Pancreas (tissue), 10 donors: ENCODE measurements at regions of chr1 and their contacts with region 1.

Region 1: GRCh38 chr1:151309811-151310323 is 17.3 kb downstream of the PI4KB start:
- DNase-seq: no peak
- ATAC-seq: peak in 3 of 4 donors; percentile 28 to 59 (median 34)
- H3K4me3 ChIP-seq: no peak overlapping the region
- H3K27ac ChIP-seq: peak overlapping the region in 1 of 4 donors; percentile 6
- H3K4me1 ChIP-seq: peaks cover 0 to 13% (median 3%) of the 10 kb centered on the region in 3 donors
- H3K27me3 ChIP-seq: no peaks in the 10 kb centered on the region
- CTCF ChIP-seq: no peak

Region 2: DNA sequence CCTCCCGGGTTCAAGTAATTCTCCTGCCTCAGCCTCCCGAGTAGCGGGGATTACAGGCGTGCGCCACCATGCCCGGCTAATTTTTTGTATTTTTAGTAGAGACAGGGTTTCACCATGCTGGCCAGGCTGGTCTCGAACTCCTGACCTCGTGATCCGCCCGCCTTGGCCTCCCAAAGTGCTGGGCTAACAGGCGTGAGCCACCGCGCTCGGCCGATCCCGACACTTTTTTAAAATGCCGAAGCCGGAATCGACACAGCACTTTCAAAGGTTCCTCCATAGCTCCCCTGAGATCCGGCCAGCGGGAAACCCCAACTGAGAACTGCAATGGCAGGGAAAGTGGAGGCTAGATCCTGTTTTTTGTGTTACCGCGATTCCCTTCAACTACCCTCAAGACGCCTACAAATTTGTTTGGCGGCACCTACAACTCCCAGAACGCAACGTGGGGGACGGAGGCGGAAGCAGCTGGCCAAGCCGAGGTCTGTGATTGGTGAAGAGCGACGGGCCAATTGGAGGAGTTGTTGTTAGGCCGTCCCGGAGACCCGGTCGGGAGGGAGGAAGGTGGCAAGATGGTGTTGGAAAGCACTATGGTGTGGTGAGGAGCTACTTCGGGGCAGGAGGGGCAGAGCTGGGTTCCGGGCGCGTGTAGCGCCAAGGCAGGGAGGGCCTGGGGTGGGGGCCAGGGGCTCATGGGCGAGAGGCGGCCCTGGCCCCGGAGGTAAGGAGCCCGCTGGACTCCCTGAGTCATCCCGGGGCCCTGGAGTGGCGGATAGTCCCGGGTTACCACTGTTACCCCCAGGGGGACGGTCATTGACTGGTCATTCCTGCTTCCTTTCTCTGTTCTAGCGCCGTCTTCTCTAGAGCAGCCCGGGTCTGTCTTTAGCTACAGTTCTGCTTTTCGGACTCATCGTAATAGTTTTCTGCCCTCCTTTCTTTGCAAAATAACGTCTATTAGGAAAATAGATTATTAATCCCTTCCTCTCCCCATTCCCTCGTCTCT is 55.4 kb before region 1 on chr1 and contains the start of gene PSMD4:
- intact Hi-C with region 1: no loop called
- DNase-seq: peak; percentile 90 to 97 (median 94)
- ATAC-seq: peak; percentile 98 to 99 (median 98)
- H3K4me3 ChIP-seq: peak within 1 kb of the TSS; percentile 68 to 91 (median 86)
- H3K27ac ChIP-seq: peak within 1 kb of the TSS; percentile 63 to 76 (median 71)
- H3K4me1 ChIP-seq: peaks cover 0 to 8% (median 0%) of the 10 kb centered on the region in 3 donors
- H3K27me3 ChIP-seq: no peaks in the 10 kb centered on the region
- CTCF ChIP-seq: no peak
- total RNA-seq, gene PSMD4: 53.7 to 83.6 (median 74.9) TPM

Region 3: GRCh38 chr1:151399890-151400495 is 90.1 kb after region 1 on chr1:
- intact Hi-C with region 1: loop called in 1 of 3 experiments (anchors 10 kb)
- DNase-seq: peak in 1 of 6 donors; percentile 31
- ATAC-seq: peak; percentile 16 to 51 (median 34)
- H3K4me3 ChIP-seq: peak overlapping the region; percentile 68 to 98 (median 86)
- H3K27ac ChIP-seq: peak overlapping the region; percentile 33 to 85 (median 74)
- H3K4me1 ChIP-seq: peaks cover 0 to 6% (median 0%) of the 10 kb centered on the region in 3 donors
- H3K27me3 ChIP-seq: no peaks in the 10 kb centered on the region
- CTCF ChIP-seq: no peak

Region 4: DNA sequence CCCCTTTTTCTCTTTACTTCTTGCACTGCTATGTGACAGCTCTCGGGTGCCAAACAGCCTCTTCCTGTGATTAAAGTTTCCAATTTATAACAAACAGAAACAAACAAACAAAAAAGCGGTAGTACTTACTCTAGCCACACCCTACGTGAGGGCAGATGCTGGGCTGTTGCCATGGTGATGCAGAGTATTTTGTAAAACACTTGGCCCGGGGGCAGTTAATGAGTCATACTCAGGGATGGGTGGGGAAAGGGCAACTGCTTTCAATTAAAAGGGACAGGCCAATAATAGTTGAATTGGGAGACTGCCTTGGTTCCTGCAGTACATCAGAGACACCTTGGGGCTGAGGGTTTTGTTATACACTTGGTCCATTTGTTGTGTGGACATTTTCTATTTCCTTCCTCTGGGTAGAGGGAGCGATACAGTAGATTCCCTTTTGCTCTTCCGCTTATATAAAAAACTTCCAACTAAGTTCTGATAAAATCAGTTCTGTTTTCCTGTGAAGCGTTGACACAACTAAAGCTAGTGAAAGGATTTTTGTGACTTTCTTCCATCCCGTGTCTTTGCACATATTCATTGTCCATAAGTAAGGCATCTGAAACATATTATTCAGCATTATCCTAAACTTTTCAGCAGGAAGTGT is 636.0 kb after region 1 on chr1:
- intact Hi-C with region 1: no loop called
- DNase-seq: peak in 4 of 6 donors; percentile 55 to 65 (median 62)
- ATAC-seq: peak; percentile 52 to 85 (median 66)
- H3K4me3 ChIP-seq: no peak overlapping the region
- H3K27ac ChIP-seq: peak overlapping the region in 2 of 4 donors; percentile 42 to 50
- H3K4me1 ChIP-seq: peaks cover 0 to 24% (median 0%) of the 10 kb centered on the region in 3 donors
- H3K27me3 ChIP-seq: no peaks in the 10 kb centered on the region
- CTCF ChIP-seq: no peak